ENCODE measurements at regions of chr14 and their contacts with region 1.

Region 1: GRCh38 chr14:52619692-52620091 is 67.1 kb downstream of the GPR137C start:
- DNase-seq: no peak
- H3K4me3 ChIP-seq: no peak overlapping the region
- H3K27ac ChIP-seq: no peak overlapping the region
- H3K4me1 ChIP-seq: no peaks in the 10 kb centered on the region
- H3K27me3 ChIP-seq: no peaks in the 10 kb centered on the region
- CTCF ChIP-seq: no peak
- POLR2A ChIP-seq: no peak

Region 2: DNA sequence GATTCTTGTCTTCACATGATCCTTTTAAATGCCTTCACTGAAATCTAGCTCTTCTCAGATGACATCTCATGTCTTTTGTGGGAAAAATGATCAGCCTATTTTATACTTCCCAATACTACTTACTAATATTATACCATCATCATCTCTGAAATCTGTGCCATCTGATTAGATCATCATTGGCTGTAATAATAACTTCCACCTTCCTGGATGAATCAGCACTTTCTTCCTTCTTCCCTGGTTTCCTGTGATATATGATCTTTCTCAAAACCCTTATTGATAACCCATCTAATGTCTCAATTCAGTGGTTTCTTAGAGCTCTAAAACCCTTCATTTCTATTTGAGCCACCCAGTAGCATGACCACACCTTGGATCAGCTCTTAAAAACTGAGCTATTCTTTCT is 36.1 kb before region 1 on chr14:
- intact Hi-C with region 1: loop called (anchors 2 kb)
- DNase-seq: no peak
- H3K4me3 ChIP-seq: no peak overlapping the region
- H3K27ac ChIP-seq: no peak overlapping the region
- H3K4me1 ChIP-seq: no peaks in the 10 kb centered on the region
- H3K27me3 ChIP-seq: no peaks in the 10 kb centered on the region
- CTCF ChIP-seq: no peak
- POLR2A ChIP-seq: no peak